ENCODE measurements at regions of chr14 and their contacts with region 1.

Region 1: GRCh38 chr14:105549481-105549880 is 23.1 kb downstream of the TMEM121 start:
- DNase-seq: peak in 1 of 10 donors; percentile 17
- H3K4me3 ChIP-seq: no peak overlapping the region
- H3K27ac ChIP-seq: no peak overlapping the region
- H3K27me3 ChIP-seq: peaks cover 0 to 14% (median 0%) of the 10 kb centered on the region in 45 donors
- CTCF ChIP-seq: no peak

Region 2: GRCh38 chr14:105999361-106000028 is 450.0 kb after region 1 on chr14:
- intact Hi-C with region 1: loop called in 1 of 2 experiments (anchors 10 kb)
- DNase-seq: peak in 2 of 10 donors; percentile 19 to 43
- H3K4me3 ChIP-seq: no peak overlapping the region
- H3K27ac ChIP-seq: no peak overlapping the region
- H3K27me3 ChIP-seq: peaks cover 0 to 17% (median 0%) of the 10 kb centered on the region in 45 donors
- CTCF ChIP-seq: peak in 40 of 56 donors; percentile 6 to 54 (median 33)